ENCODE measurements at regions of chr17 and their contacts with region 1.

Region 1: GRCh38 chr17:1532836-1533602 is 16.6 kb upstream of the INPP5K start:
- DNase-seq: peak in 1 of 5 donors; percentile 48
- ATAC-seq: peak; percentile 63 to 71 (median 69)
- H3K4me3 ChIP-seq: no peak overlapping the region
- H3K27ac ChIP-seq: peak overlapping the region in 11 of 12 donors; percentile 23 to 79 (median 52)
- H3K4me1 ChIP-seq: peaks cover 0 to 19% (median 2%) of the 10 kb centered on the region in 12 donors
- H3K27me3 ChIP-seq: no peaks in the 10 kb centered on the region
- CTCF ChIP-seq: peak in 11 of 12 donors; percentile 17 to 54 (median 39)
- POLR2A ChIP-seq: no peak

Region 2: DNA sequence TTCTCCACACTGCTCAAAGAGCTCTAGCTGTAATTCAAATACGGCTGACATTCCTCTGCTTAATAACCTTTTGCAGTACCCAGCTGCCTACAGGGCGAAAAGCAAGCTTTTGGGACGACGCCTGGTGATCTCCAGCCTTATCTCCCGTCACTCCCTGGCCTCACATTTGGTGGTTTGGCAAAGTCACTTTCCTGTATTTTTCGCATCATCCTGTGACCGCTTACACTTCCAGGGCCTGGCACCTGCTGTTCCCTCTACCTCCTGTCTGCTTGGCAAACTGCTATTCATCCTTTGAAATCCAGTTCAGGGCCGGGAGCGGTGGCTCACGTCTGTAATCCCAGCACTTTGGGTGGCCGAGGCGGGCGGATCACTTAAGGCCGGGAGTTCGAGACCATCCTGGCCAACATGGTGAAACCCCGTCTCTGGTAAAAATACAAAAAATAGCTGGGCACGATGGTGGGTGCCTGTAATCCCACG is 265.5 kb before region 1 on chr17:
- intact Hi-C with region 1: loop called in 1 of 10 experiments (anchors 5 kb)
- DNase-seq: no peak
- ATAC-seq: peak; percentile 13 to 48 (median 20)
- H3K4me3 ChIP-seq: peak overlapping the region; percentile 56 to 87 (median 70)
- H3K27ac ChIP-seq: peak overlapping the region; percentile 84 to 93 (median 90)
- H3K4me1 ChIP-seq: peaks cover 0 to 27% (median 11%) of the 10 kb centered on the region in 12 donors
- H3K27me3 ChIP-seq: peaks cover 2 to 30% (median 23%) of the 10 kb centered on the region in 9 donors
- CTCF ChIP-seq: no peak
- POLR2A ChIP-seq: no peak

Region 3: DNA sequence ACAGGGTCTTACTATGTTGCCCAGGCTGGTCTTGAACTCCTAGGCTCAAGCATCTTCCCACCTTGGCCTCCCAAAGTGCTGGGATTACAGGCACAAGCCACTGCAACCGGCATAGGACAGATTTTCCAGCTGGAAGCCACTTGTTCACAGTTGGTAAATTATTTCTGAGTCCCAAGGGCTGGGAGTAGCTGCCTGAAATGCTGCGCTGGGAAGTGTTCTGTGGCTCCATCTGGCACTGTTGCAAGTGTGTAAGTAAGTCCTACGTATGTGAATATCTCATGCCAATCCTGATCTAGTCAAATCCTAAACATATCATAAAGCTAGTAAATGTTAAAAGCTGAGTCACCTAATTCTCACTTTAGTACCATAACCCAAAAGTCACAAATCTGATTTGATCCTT is 181.0 kb before region 1 on chr17:
- intact Hi-C with region 1: loop called in 1 of 10 experiments (anchors 5 kb)
- DNase-seq: no peak
- ATAC-seq: no peak
- H3K4me3 ChIP-seq: no peak overlapping the region
- H3K27ac ChIP-seq: no peak overlapping the region
- H3K4me1 ChIP-seq: peaks cover 0 to 22% (median 14%) of the 10 kb centered on the region in 12 donors
- H3K27me3 ChIP-seq: no peaks in the 10 kb centered on the region
- CTCF ChIP-seq: no peak
- POLR2A ChIP-seq: no peak

Region 4: GRCh38 chr17:1590031-1590748 is 57.2 kb after region 1 on chr17:
- intact Hi-C with region 1: no loop called
- DNase-seq: peak; percentile 64 to 92 (median 82)
- ATAC-seq: peak; percentile 91 to 95 (median 94)
- H3K4me3 ChIP-seq: no peak overlapping the region
- H3K27ac ChIP-seq: peak overlapping the region; percentile 58 to 91 (median 79)
- H3K4me1 ChIP-seq: peaks cover 0 to 68% (median 15%) of the 10 kb centered on the region in 12 donors
- H3K27me3 ChIP-seq: no peaks in the 10 kb centered on the region
- CTCF ChIP-seq: no peak
- POLR2A ChIP-seq: peak in 1 of 2 donors; percentile 12